ENCODE measurements at regions of chr16 and their contacts with region 1.

Region 1: DNA sequence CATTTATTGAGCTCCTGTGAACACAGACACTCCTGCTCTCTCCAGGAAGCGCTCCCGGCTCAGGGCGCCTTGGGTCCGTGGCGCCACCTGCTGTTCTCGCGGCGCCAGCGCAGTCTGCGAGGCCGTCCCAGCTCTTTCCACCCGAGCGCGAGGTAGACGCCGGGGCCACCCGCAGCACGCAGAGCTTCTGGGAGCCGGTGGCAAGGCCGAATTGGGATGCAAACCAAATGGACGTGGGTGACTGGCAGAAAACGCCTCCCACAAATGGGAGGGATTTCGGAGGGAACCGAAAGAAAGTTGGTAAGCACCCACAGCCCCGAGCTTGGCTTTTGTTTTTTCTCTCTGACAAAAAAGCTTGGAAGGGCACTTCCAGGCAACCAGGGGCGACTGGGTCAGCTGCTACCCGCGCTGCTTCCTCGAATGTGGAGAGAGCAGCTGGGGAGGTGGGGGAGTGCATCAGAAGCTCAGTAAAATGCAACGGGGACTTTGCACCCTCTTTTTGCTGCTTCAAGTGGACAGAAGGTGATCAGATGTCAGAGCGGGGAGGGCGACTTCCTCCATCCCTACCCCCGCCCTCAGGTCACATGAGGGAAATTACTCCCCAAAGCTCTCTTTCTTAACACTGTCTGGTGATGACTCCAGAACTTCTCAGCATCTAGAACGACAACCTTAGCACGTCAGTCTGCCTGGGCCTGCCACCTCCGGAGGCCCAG is 13.5 kb upstream of the N4BP1 start:
- DNase-seq: peak; percentile 84
- ATAC-seq: peak; percentile 96
- H3K4me3 Mint-ChIP-seq: peak overlapping the region; percentile 77
- H3K27ac Mint-ChIP-seq: peak overlapping the region; percentile 73
- H3K4me1 Mint-ChIP-seq: peaks cover 48% of the 10 kb centered on the region
- H3K27me3 Mint-ChIP-seq: no peaks in the 10 kb centered on the region

Region 2: GRCh38 chr16:48164907-48165726 is 458.3 kb before region 1 on chr16:
- CTCF ChIA-PET with region 1: interaction called, 13 read pairs
- POLR2A ChIA-PET with region 1: no interaction called
- DNase-seq: peak; percentile 71
- ATAC-seq: peak; percentile 96
- H3K4me3 Mint-ChIP-seq: no peak overlapping the region
- H3K27ac Mint-ChIP-seq: no peak overlapping the region
- H3K4me1 Mint-ChIP-seq: peaks cover 11% of the 10 kb centered on the region
- H3K27me3 Mint-ChIP-seq: peaks cover 2% of the 10 kb centered on the region

Region 3: DNA sequence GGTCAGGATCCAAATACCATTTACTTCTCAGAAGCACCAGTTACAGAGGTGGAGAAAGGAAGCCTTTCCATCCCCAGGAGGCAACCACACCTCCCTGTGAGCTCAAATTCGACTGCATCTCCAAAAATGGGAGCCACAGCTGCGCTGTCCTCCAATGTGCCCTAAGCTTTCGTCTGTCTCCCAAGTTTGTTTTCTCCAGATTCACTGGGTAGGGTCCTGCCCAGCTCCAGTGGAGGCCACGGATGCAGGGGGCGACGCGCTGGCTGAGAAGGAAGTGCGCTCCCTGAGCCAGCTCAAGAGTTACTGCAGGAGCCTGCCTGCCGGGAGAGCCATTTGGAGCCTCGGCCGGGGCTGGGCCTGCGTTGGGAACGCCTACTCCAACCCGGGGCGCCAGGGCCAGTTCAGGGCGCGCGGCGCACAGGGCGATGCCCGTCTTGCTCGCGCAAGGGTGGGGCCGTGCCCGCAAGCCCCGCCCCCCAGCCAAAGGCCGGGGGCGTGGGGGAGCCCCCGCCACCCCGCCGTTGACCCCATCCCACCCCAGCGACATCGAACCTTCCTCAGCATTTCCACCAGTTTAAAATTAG is 257.8 kb before region 1 on chr16:
- CTCF ChIA-PET with region 1: interaction called, 30 read pairs
- POLR2A ChIA-PET with region 1: interaction called, 7 read pairs
- DNase-seq: peak; percentile 86
- ATAC-seq: peak; percentile 98
- H3K4me3 Mint-ChIP-seq: peak overlapping the region; percentile 93
- H3K27ac Mint-ChIP-seq: peak overlapping the region; percentile 98
- H3K4me1 Mint-ChIP-seq: peaks cover 46% of the 10 kb centered on the region
- H3K27me3 Mint-ChIP-seq: no peaks in the 10 kb centered on the region

Region 4: DNA sequence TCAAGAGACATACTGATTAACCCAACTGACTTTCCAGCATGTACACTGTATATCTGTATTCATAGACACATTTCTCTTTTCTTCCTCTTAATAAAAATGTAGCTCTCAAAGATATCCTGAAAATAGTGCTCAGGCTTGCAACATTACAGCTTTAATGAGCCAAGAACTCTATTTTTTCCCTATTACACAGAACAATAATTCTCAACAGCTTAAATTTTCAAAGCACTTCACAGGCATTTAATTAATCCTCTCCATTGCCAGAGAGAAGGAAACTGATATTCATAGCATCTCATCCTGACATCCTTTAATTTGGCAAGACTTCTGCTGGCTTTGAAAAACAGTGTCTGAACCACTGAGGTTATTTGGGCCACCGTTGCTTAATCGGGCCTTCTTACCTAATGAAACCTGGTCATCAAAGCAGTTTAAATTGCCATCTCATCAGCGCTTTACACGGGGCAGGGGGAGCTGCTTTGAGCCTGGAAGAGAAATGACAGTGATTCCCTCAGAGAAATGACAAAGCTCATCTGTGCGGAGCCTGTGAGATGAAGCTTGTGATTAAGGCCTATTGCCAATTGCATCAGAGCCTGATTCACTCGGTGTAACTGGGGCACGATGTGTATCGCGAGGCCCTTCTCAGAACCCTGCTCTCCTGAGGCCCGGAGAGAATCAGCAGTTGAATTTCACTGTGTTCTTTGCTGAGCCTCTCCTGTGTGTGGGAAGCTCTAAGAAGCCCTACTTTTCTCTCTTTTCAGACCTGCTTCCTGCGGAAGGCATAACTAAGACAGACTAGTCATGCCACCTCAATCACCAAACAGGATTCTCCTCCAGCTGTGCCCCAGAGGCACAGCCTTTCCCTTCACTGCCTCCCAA is 229.7 kb before region 1 on chr16:
- CTCF ChIA-PET with region 1: interaction called, 10 read pairs
- POLR2A ChIA-PET with region 1: no interaction called
- DNase-seq: no peak
- ATAC-seq: no peak
- H3K4me3 Mint-ChIP-seq: no peak overlapping the region
- H3K27ac Mint-ChIP-seq: no peak overlapping the region
- H3K4me1 Mint-ChIP-seq: peaks cover 7% of the 10 kb centered on the region
- H3K27me3 Mint-ChIP-seq: no peaks in the 10 kb centered on the region

Region 5: GRCh38 chr16:48405153-48405882 is 218.1 kb before region 1 on chr16:
- CTCF ChIA-PET with region 1: no interaction called
- POLR2A ChIA-PET with region 1: no interaction called
- DNase-seq: no peak
- ATAC-seq: no peak
- H3K4me3 Mint-ChIP-seq: no peak overlapping the region
- H3K27ac Mint-ChIP-seq: no peak overlapping the region
- H3K4me1 Mint-ChIP-seq: peaks cover 7% of the 10 kb centered on the region
- H3K27me3 Mint-ChIP-seq: no peaks in the 10 kb centered on the region

Region 6: GRCh38 chr16:48499923-48500381 is 123.5 kb before region 1 on chr16:
- CTCF ChIA-PET with region 1: no interaction called
- POLR2A ChIA-PET with region 1: no interaction called
- DNase-seq: no peak
- ATAC-seq: no peak
- H3K4me3 Mint-ChIP-seq: no peak overlapping the region
- H3K27ac Mint-ChIP-seq: no peak overlapping the region
- H3K4me1 Mint-ChIP-seq: no peaks in the 10 kb centered on the region
- H3K27me3 Mint-ChIP-seq: no peaks in the 10 kb centered on the region

Region 7: GRCh38 chr16:48542020-48542473 is 81.4 kb before region 1 on chr16:
- CTCF ChIA-PET with region 1: interaction called, 46 read pairs
- POLR2A ChIA-PET with region 1: interaction called, 6 read pairs
- DNase-seq: peak; percentile 41
- ATAC-seq: no peak
- H3K4me3 Mint-ChIP-seq: no peak overlapping the region
- H3K27ac Mint-ChIP-seq: no peak overlapping the region
- H3K4me1 Mint-ChIP-seq: peaks cover 24% of the 10 kb centered on the region
- H3K27me3 Mint-ChIP-seq: no peaks in the 10 kb centered on the region

Region 8: GRCh38 chr16:48574763-48575162 is 48.7 kb before region 1 on chr16:
- CTCF ChIA-PET with region 1: interaction called, 11 read pairs
- POLR2A ChIA-PET with region 1: no interaction called
- DNase-seq: no peak
- ATAC-seq: no peak
- H3K4me3 Mint-ChIP-seq: no peak overlapping the region
- H3K27ac Mint-ChIP-seq: no peak overlapping the region
- H3K4me1 Mint-ChIP-seq: peaks cover 49% of the 10 kb centered on the region
- H3K27me3 Mint-ChIP-seq: no peaks in the 10 kb centered on the region

Region 9: GRCh38 chr16:48687421-48688038 is 64.1 kb after region 1 on chr16:
- CTCF ChIA-PET with region 1: no interaction called
- POLR2A ChIA-PET with region 1: no interaction called
- DNase-seq: peak; percentile 55
- ATAC-seq: peak; percentile 88
- H3K4me3 Mint-ChIP-seq: no peak overlapping the region
- H3K27ac Mint-ChIP-seq: no peak overlapping the region
- H3K4me1 Mint-ChIP-seq: no peaks in the 10 kb centered on the region
- H3K27me3 Mint-ChIP-seq: peaks cover 8% of the 10 kb centered on the region

Measured in activated CD8-positive, alpha-beta T cell treated with anti-CD3 and anti-CD28 coated beads, Interleukin-2, amount 10 ng/mL, durations not matched to agents 7 days and 5 days (primary cell).